ENCODE measurements at regions of chr16 and their contacts with region 1.

Region 1: DNA sequence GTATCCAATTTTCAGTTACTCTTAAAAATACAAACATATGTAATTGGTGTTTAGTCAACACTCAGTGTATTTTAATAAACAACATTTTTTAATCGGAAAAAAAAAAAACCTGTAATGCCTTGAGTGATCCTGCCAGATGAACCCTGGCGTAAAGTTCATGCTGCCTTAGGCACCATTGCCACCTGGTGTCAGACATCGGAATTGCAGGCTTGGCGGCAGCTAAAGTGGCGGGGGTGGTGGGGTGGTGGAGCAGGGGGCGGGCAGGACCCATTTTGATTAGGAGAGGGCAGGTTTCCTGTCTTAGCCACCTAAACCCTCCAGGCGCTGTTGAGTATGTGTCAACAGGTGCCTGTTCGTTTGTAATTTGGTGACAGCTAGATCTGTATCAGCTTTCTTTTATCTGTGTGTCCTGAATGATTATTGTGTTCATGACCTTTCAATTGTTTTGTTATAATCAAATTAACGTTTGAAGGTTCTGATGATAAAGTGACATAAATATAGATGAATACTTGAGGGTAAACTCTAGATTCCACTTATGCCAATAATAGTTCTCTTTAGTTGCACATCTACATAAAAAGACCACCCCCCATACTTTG is 588.7 kb downstream of the CDH13 start:
- DNase-seq: no peak
- ATAC-seq: no peak
- H3K4me3 ChIP-seq: no peak overlapping the region
- H3K27ac ChIP-seq: no peak overlapping the region
- H3K4me1 ChIP-seq: peaks cover 0 to 8% (median 0%) of the 10 kb centered on the region in 12 donors
- H3K27me3 ChIP-seq: no peaks in the 10 kb centered on the region
- CTCF ChIP-seq: peak; percentile 32 to 59 (median 49)
- POLR2A ChIP-seq: no peak

Region 2: GRCh38 chr16:82603784-82604411 is 611.6 kb before region 1 on chr16:
- intact Hi-C with region 1: loop called in 1 of 10 experiments (anchors 10 kb)
- DNase-seq: peak; percentile 45 to 67 (median 52)
- ATAC-seq: peak; percentile 56 to 93 (median 84)
- H3K4me3 ChIP-seq: no peak overlapping the region
- H3K27ac ChIP-seq: no peak overlapping the region
- H3K4me1 ChIP-seq: peaks cover 0 to 6% (median 0%) of the 10 kb centered on the region in 12 donors
- H3K27me3 ChIP-seq: no peaks in the 10 kb centered on the region
- CTCF ChIP-seq: peak; percentile 45 to 83 (median 74)
- POLR2A ChIP-seq: no peak

Region 3: GRCh38 chr16:82755569-82756282 is 459.8 kb before region 1 on chr16:
- intact Hi-C with region 1: loop called in 2 of 10 experiments (anchors 10 kb)
- DNase-seq: no peak
- ATAC-seq: no peak
- H3K4me3 ChIP-seq: no peak overlapping the region
- H3K27ac ChIP-seq: peak overlapping the region in 6 of 12 donors; percentile 1 to 51 (median 36)
- H3K4me1 ChIP-seq: peaks cover 0 to 49% (median 24%) of the 10 kb centered on the region in 12 donors
- H3K27me3 ChIP-seq: no peaks in the 10 kb centered on the region
- CTCF ChIP-seq: peak in 2 of 12 donors; percentile 8 to 15
- POLR2A ChIP-seq: no peak

Region 4: GRCh38 chr16:83137326-83137770 is 78.2 kb before region 1 on chr16:
- intact Hi-C with region 1: no loop called
- DNase-seq: no peak
- ATAC-seq: peak in 2 of 4 donors; percentile 45 to 49
- H3K4me3 ChIP-seq: peak overlapping the region in 9 of 12 donors; percentile 7 to 48 (median 33)
- H3K27ac ChIP-seq: no peak overlapping the region
- H3K4me1 ChIP-seq: peaks cover 0 to 5% (median 0%) of the 10 kb centered on the region in 12 donors
- H3K27me3 ChIP-seq: no peaks in the 10 kb centered on the region
- CTCF ChIP-seq: no peak
- POLR2A ChIP-seq: no peak

Region 5: DNA sequence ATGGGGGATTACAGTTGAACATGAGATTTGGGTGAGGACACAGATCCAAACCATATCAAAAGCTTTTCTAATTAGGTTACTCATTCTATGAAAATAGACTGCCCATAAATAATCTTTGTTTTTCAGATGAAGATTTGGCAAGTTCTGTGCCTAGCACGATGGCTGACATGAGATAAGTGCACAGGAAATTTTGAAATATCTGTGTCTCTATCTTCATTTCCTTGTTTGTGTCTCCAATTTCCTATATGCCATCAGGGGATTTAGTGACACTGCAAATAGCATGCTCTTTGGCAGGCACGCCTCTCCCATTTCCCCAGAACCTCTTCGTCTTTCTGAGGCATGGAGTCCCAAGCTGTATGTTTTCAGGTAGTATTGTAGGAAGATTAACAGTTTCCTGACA is 44.1 kb before region 1 on chr16:
- intact Hi-C with region 1: no loop called
- DNase-seq: no peak
- ATAC-seq: no peak
- H3K4me3 ChIP-seq: no peak overlapping the region
- H3K27ac ChIP-seq: no peak overlapping the region
- H3K4me1 ChIP-seq: no peaks in the 10 kb centered on the region
- H3K27me3 ChIP-seq: no peaks in the 10 kb centered on the region
- CTCF ChIP-seq: no peak
- POLR2A ChIP-seq: no peak

Region 6: GRCh38 chr16:83271970-83272575 is 56.6 kb after region 1 on chr16:
- intact Hi-C with region 1: no loop called
- DNase-seq: no peak
- ATAC-seq: no peak
- H3K4me3 ChIP-seq: no peak overlapping the region
- H3K27ac ChIP-seq: no peak overlapping the region
- H3K4me1 ChIP-seq: no peaks in the 10 kb centered on the region
- H3K27me3 ChIP-seq: no peaks in the 10 kb centered on the region
- CTCF ChIP-seq: no peak
- POLR2A ChIP-seq: no peak